Mammary epithelial cell (primary cell): ENCODE measurements at regions of chr3 and their contacts with region 1.

Region 1: DNA sequence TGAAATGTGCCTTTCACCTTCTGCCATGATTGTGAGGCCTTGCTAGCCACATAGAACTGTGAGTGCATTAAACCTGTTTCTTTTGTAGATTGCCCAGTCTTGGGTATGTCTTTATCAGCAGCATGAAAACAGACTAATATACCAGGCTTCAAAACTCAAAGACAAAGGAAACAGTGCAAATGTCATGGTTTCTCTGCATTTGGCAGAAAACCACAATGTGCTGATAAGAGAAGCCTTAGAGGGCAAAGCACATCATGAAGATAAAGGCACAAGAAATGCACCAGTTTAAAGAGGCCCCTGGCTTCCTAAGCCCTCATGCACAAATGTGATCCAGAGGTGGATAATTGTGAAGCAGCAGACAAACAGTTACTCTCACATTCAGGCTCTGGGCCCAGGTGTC is 259.2 kb downstream of the CPNE4 start:
- DNase-seq: no peak
- H3K4me3 ChIP-seq: no peak overlapping the region
- H3K27ac ChIP-seq: no peak overlapping the region
- H3K4me1 ChIP-seq: no peaks in the 10 kb centered on the region
- H3K27me3 ChIP-seq: no peaks in the 10 kb centered on the region
- CTCF ChIP-seq: no peak

Region 2: GRCh38 chr3:131374741-131375140 is 400.9 kb before region 1 on chr3:
- CTCF ChIA-PET with region 1: no interaction called
- dilution Hi-C with region 1: no loop called
- in situ Hi-C with region 1: no loop called
- intact Hi-C with region 1: loop called (anchors 5 kb)
- DNase-seq: no peak
- H3K4me3 ChIP-seq: no peak overlapping the region
- H3K27ac ChIP-seq: no peak overlapping the region
- H3K4me1 ChIP-seq: no peaks in the 10 kb centered on the region
- H3K27me3 ChIP-seq: no peaks in the 10 kb centered on the region
- CTCF ChIP-seq: no peak

Region 3: DNA sequence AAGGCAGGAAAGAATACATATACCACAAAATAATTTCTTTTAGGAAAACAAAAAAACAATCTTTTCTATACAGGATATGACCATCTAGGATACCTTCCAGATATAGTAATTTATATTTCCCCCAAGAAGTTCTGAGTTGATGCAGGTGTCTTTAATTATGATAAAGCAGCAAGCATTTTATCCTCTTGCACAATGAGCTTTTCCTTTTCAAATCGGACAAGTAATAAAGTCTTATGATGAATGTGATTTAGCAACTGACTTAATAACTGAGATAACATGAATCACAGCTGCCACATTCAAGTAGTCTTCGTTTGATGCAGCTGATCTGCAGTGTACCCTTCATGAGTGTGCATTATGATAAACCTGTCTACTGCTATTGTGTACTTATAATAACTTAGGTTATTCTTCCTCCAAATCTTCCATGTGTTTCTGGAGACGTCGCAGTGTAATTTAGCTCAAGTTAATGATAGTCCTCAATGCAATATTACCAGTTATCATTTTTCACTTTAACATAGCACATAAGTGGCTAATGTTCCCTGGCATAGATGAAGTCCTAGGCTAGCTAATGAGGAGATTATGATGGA is 12.6 kb before region 1 on chr3:
- CTCF ChIA-PET with region 1: no interaction called
- dilution Hi-C with region 1: no loop called
- in situ Hi-C with region 1: no loop called
- intact Hi-C with region 1: no loop called
- DNase-seq: no peak
- H3K4me3 ChIP-seq: no peak overlapping the region
- H3K27ac ChIP-seq: no peak overlapping the region
- H3K4me1 ChIP-seq: no peaks in the 10 kb centered on the region
- H3K27me3 ChIP-seq: no peaks in the 10 kb centered on the region
- CTCF ChIP-seq: no peak